PC-9 (cell line): ENCODE measurements at regions of chr14 and their contacts with region 1.

Region 1: GRCh38 chr14:105490572-105491366 is at the start of gene TEDC1:
- DNase-seq: peak; percentile 97 to 99
- H3K4me3 ChIP-seq: peak within 1 kb of the TSS; percentile 94
- H3K27ac ChIP-seq: peak within 1 kb of the TSS; percentile 65
- H3K4me1 ChIP-seq: peaks cover 28% of the 10 kb centered on the region
- H3K27me3 ChIP-seq: no peaks in the 10 kb centered on the region
- CTCF ChIP-seq: peak; percentile 51; the same call in 1 of the 2 replicates
- total RNA-seq, gene TEDC1: 21.2 and 31.9 TPM in 2 replicates

Region 2: GRCh38 chr14:105086833-105087307 is 403.9 kb before region 1 on chr14:
- CTCF ChIA-PET with region 1: no interaction called
- POLR2A ChIA-PET with region 1: no interaction called
- intact Hi-C with region 1: loop called (anchors 5 kb)
- DNase-seq: peak; percentile 73 to 85
- H3K4me3 ChIP-seq: peak overlapping the region; percentile 80
- H3K27ac ChIP-seq: peak overlapping the region; percentile 80
- H3K4me1 ChIP-seq: peaks cover 43% of the 10 kb centered on the region
- H3K27me3 ChIP-seq: no peaks in the 10 kb centered on the region
- CTCF ChIP-seq: peak; percentile 70

Region 3: DNA sequence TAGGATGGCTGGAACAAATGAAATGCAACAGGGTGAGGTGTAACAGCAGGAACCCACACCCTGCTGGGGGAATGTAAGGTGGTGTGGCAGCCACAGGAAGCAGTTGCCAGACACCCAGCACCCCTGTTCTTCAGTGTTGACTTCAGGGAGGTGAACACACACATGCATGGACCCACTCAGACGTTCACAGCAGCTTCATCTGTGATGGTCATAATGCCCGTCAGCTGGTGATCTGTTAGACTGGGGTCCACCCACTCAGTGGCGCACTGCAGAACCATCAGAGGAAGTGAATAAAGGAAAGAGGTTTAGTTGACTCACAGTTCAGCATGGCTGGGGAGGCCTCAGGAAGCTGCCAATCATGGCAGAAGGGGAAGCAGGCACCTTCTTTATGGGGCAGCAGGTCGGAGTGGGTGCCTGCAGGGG is 115.1 kb before region 1 on chr14:
- CTCF ChIA-PET with region 1: interaction called, 7 read pairs
- POLR2A ChIA-PET with region 1: no interaction called
- intact Hi-C with region 1: loop called (anchors 1 kb)
- DNase-seq: no peak
- H3K4me3 ChIP-seq: no peak overlapping the region
- H3K27ac ChIP-seq: no peak overlapping the region
- H3K4me1 ChIP-seq: no peaks in the 10 kb centered on the region
- H3K27me3 ChIP-seq: no peaks in the 10 kb centered on the region
- CTCF ChIP-seq: no peak

Region 4: GRCh38 chr14:105414456-105415371 is 76.1 kb before region 1 on chr14:
- CTCF ChIA-PET with region 1: no interaction called
- POLR2A ChIA-PET with region 1: interaction called, 27 read pairs
- intact Hi-C with region 1: no loop called
- DNase-seq: peak in 1 of 2 experiments; percentile 46
- H3K4me3 ChIP-seq: peak overlapping the region; percentile 43; the same call in 1 of the 2 replicates
- H3K27ac ChIP-seq: no peak overlapping the region
- H3K4me1 ChIP-seq: peaks cover 12% of the 10 kb centered on the region
- H3K27me3 ChIP-seq: peaks cover 34% of the 10 kb centered on the region
- CTCF ChIP-seq: no peak; the same call in 1 of the 2 replicates

Region 5: DNA sequence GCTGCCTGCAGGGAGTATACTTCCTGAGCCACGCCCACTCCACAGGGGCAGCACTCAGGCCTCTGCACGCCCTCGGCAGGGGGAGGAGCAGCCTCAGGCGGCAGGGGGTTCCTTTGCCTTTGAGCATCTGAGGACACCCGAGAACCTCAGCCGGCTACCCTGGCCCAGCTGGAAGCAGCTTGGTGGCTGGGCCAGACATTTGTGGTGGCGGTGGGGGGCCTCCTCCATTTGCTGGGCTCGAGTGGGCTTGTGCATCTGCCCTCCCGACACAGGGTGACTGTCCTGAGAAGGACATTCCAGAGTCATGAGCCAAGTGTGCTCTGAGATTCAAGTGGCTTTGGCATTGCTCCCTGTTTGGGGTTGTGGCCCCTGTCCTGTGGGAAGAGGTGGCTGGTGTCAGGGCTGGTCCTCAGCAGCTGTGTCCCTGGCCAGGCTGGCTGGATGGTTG is 25.2 kb before region 1 on chr14:
- CTCF ChIA-PET with region 1: no interaction called
- POLR2A ChIA-PET with region 1: no interaction called
- intact Hi-C with region 1: loop called (anchors 2 kb)
- DNase-seq: peak; percentile 75 to 82
- H3K4me3 ChIP-seq: no peak overlapping the region
- H3K27ac ChIP-seq: no peak overlapping the region
- H3K4me1 ChIP-seq: peaks cover 37% of the 10 kb centered on the region
- H3K27me3 ChIP-seq: no peaks in the 10 kb centered on the region
- CTCF ChIP-seq: no peak

Region 6: DNA sequence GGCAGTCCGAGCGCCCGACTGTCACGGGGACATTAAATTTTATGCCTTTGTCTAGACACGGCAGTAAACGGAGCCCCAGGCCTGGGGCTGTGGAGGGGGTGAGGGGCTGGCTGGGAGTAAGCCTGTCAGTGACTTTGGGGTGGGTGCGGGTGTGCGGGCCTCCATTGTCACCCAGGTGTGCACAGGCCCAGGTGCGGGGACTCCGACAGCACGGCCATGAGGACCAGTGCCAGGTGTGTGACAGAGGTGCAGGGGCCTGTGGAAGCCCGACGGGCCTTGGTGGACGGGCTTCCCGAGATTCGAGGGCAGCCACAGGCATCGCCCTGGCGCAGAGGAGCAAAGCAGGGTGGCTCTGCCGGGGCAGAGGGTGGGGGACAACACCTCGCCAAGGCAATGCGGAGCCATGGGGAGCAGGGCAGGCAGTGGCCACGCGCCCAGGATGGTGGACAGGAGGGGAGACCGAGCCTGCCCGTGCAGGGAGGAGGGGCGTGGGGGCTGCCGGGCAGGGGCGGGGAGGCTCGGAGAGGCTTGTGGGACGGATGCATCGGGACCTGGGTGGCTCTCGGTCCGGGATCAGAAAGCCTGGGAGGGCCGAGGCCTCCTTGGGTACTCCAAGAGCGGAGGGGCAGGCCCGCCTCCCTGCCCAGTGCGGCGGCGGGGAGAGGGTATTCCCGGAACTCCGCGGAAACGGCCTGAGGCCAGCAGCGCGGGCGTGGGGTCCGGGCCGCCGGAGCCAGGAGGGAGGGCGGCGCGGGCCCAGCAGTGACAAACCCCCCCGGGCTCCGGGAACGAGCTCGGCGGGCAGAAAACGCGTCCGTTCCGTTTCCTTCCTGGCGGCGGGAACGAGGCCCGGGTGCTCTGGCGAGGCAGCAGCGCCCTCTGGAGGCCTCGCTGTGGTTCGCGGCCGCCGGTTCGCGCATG is 37.2 kb after region 1 on chr14:
- CTCF ChIA-PET with region 1: no interaction called
- POLR2A ChIA-PET with region 1: interaction called, 12 read pairs
- intact Hi-C with region 1: loop called (anchors 1 kb)
- DNase-seq: peak in 1 of 2 experiments; percentile 63
- H3K4me3 ChIP-seq: peak overlapping the region; percentile 58
- H3K27ac ChIP-seq: no peak overlapping the region
- H3K4me1 ChIP-seq: no peaks in the 10 kb centered on the region
- H3K27me3 ChIP-seq: peaks cover 22% of the 10 kb centered on the region
- CTCF ChIP-seq: peak; percentile 78

Region 7: GRCh38 chr14:105549481-105549880 is 58.7 kb after region 1 on chr14:
- CTCF ChIA-PET with region 1: no interaction called
- POLR2A ChIA-PET with region 1: no interaction called
- intact Hi-C with region 1: no loop called
- DNase-seq: no peak
- H3K4me3 ChIP-seq: no peak overlapping the region
- H3K27ac ChIP-seq: no peak overlapping the region
- H3K4me1 ChIP-seq: no peaks in the 10 kb centered on the region
- H3K27me3 ChIP-seq: peaks cover 58% of the 10 kb centered on the region
- CTCF ChIP-seq: no peak

Region 8: DNA sequence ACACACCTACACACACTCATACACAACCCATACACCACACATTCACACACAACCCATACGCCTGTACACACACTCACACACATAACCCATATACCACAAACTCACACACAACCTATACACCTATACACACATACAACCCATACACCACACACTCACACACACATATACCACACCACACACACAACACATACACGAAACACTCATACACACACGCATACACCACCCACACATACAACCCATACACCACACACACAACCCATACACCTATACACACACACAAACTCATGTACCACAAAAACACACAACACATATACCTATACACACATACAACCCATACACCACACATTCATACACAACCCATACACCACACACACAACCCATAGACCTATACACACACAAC is 199.9 kb after region 1 on chr14:
- CTCF ChIA-PET with region 1: no interaction called
- POLR2A ChIA-PET with region 1: no interaction called
- intact Hi-C with region 1: no loop called
- DNase-seq: no peak
- H3K4me3 ChIP-seq: no peak overlapping the region
- H3K27ac ChIP-seq: no peak overlapping the region
- H3K4me1 ChIP-seq: no peaks in the 10 kb centered on the region
- H3K27me3 ChIP-seq: no peaks in the 10 kb centered on the region
- CTCF ChIP-seq: no peak